PC-9 (cell line): ENCODE measurements at regions of chr18 and their contacts with region 1.

Region 1: DNA sequence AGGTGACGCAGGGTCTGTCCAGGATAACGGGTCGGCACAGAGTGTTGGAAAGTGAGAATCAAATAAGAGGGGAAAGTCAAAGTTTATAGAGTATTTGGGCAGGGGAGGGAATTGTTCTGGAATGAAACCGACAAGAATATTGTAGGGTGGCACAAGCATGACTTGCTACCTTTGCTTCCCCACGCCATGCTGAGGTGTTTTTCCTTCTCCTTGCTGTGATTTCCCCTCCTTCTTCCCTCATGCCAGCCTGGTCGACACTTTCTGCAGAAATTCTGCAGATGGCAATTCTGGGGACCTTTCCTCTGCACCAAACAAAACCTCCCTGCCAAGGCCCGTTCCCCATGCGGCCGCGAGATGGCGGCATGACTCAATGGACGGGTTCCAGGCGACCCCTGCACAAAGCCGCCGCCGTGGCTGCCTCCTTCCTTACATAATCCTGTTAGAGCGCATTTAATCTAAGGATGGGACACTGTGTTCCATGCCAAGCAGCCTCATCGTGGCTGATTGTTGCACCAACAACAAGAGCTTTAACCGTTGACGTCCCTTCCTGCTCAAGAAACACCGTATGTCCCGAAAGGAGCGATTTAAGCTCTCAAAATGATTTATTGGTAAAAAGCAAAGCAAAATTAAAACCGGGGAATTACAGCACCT is at the start of gene MRO:
- DNase-seq: peak; percentile 59 to 60
- H3K4me3 ChIP-seq: peak within 1 kb of the TSS; percentile 51; the same call in 1 of the 2 replicates
- H3K27ac ChIP-seq: no peak within 1 kb of the TSS
- H3K4me1 ChIP-seq: peaks cover 12% of the 10 kb centered on the region
- H3K27me3 ChIP-seq: no peaks in the 10 kb centered on the region
- CTCF ChIP-seq: peak; percentile 92
- total RNA-seq, gene MRO: not detected in 2 replicates

Region 2: GRCh38 chr18:50866765-50867164 is 46.9 kb after region 1 on chr18:
- CTCF ChIA-PET with region 1: no interaction called
- POLR2A ChIA-PET with region 1: no interaction called
- intact Hi-C with region 1: loop called (anchors 2 kb)
- DNase-seq: no peak
- H3K4me3 ChIP-seq: no peak overlapping the region
- H3K27ac ChIP-seq: no peak overlapping the region
- H3K4me1 ChIP-seq: peaks cover 35% of the 10 kb centered on the region
- H3K27me3 ChIP-seq: no peaks in the 10 kb centered on the region
- CTCF ChIP-seq: peak; percentile 42; the same call in 1 of the 2 replicates

Region 3: DNA sequence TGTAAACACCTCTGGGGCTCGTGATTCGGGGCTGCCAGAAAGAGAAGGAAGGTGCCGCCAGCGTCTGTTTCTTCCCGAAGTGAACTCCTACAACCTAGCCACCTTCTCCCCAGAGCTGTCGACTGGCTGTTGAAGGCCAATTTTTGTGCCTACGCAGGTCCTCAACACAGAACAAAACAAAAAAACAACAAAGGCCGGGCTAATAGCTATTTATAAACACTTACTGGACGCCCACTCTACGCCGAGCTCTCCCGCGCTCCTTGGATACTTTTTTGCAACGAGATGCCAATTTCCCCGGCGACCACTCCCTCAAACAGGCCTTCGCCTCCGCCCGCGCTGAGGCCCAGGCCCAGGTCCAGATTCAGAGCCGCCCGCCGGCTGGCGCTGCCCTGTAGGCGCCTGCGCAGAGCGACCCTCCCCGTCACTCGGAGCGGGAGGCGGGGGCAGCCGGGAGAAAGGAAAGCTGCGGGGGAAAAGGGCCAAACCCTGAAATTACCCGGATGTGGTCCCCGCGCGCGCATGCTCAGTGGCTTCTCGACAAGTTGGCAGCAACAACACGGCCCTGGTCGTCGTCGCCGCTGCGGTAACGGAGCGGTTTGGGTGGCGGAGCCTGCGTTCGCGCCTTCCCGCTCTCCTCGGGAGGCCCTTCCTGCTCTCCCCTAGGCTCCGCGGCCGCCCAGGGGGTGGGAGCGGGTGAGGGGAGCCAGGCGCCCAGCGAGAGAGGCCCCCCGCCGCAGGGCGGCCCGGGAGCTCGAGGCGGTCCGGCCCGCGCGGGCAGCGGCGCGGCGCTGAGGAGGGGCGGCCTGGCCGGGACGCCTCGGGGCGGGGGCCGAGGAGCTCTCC is 210.1 kb after region 1 on chr18 and contains the start of gene SMAD4:
- CTCF ChIA-PET with region 1: no interaction called
- POLR2A ChIA-PET with region 1: no interaction called
- intact Hi-C with region 1: no loop called
- DNase-seq: peak; percentile 82 to 92
- H3K4me3 ChIP-seq: peak within 1 kb of the TSS; percentile 80
- H3K27ac ChIP-seq: peak within 1 kb of the TSS; percentile 67
- H3K4me1 ChIP-seq: peaks cover 33% of the 10 kb centered on the region
- H3K27me3 ChIP-seq: no peaks in the 10 kb centered on the region
- CTCF ChIP-seq: no peak
- total RNA-seq, gene SMAD4: 51.2 and 60.7 TPM in 2 replicates

Region 4: DNA sequence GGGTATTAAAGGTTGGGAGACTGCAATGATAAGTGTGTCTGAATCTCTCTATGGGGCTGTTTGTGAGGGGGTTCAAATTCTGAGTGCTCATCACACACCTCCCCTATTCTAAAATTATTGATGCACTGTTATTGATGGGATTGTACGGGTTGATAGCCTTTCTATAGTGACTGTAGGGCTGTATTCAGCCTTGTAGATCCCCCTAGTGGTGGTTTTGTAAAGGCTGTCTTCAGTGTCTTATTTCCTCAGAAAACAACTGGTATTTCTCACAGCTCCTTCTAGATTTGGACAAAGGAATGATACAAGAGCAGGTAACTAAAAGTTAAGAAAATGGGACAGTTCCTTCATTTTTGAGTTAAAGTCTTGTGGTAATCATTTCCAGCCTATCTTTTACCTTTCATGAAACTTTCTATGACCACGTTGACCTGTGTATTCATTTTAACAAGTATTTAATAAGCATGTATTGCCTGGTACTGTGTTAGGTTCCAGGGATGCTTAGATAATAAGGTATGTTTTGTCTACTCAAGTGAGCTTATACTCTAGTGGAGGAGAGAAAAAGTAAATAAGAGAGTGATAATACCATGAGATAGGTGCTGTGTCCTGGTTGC is 231.4 kb after region 1 on chr18:
- CTCF ChIA-PET with region 1: no interaction called
- POLR2A ChIA-PET with region 1: no interaction called
- intact Hi-C with region 1: loop called (anchors 1 kb)
- DNase-seq: no peak
- H3K4me3 ChIP-seq: no peak overlapping the region
- H3K27ac ChIP-seq: no peak overlapping the region
- H3K4me1 ChIP-seq: no peaks in the 10 kb centered on the region
- H3K27me3 ChIP-seq: no peaks in the 10 kb centered on the region
- CTCF ChIP-seq: peak; percentile 83